Panc1 (cell line): ENCODE measurements at regions of chr9 and their contacts with region 1.

Region 1: DNA sequence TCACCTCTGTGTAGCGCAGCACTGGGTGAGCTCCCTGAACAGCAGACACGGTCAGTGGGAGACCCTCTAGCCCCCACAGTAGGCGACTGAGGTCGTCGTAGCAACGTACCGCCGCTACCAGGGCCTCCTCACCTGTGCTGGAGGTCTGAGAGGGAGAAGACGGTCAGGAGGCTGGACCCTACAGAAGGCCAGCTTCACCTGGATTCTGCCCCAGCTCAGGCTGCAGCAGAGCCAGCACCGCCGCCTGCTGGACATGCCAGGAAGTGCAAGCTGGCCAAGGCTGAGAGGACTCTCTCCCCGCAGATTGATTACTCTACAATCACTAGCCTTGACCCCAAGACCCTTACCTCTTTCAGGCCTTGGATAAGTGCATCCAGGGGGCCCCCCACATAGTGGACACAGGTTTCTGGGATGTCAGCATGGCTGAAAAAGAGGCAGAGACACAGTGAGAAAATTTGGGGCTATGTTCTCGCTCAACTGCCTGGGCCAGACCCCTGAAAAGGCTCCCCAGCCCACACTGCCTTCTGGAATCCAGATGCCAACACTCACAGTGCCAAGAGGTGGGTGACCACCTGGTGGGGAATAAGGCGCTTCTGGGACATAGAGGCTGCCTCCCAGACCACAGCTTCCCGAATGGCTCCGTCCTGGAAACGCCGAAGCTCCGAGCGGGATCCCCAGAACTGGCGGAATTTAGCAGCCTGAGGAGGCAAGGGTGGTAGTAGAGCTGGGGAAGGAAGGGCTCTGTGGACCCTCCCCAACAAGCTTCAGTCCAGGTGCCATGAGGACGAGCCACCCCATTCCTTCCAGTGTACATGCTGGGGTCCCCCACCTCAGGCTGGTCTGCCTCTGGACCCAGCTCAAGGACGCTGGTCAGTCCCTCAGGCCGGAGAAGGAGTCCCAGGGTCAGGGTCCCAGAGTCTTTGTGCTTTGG is 6.9 kb downstream of the NOL6 start:
- DNase-seq: no peak
- ATAC-seq: peak; percentile 81
- H3K4me3 ChIP-seq: no peak overlapping the region
- H3K27ac ChIP-seq: no peak overlapping the region
- H3K4me1 ChIP-seq: 0 out of 2 replicates have a peak, but pooled peaks cover under 1% of the 10 kb centered on the region
- H3K27me3 ChIP-seq: no peaks in the 10 kb centered on the region
- CTCF ChIP-seq: no peak

Region 2: GRCh38 chr9:32854271-32854670 is 612.6 kb before region 1 on chr9:
- CTCF ChIA-PET with region 1: no interaction called
- POLR2A ChIA-PET with region 1: no interaction called
- in situ Hi-C with region 1: no loop called
- intact Hi-C with region 1: no loop called
- DNase-seq: no peak
- ATAC-seq: no peak
- H3K4me3 ChIP-seq: no peak overlapping the region
- H3K27ac ChIP-seq: no peak overlapping the region
- H3K4me1 ChIP-seq: no peaks in the 10 kb centered on the region
- H3K27me3 ChIP-seq: 0 out of 2 replicates have a peak, but pooled peaks cover 4% of the 10 kb centered on the region
- CTCF ChIP-seq: no peak

Region 3: GRCh38 chr9:33340186-33340585 is 126.6 kb before region 1 on chr9:
- CTCF ChIA-PET with region 1: no interaction called
- POLR2A ChIA-PET with region 1: no interaction called
- in situ Hi-C with region 1: no loop called
- intact Hi-C with region 1: no loop called
- DNase-seq: no peak
- ATAC-seq: no peak
- H3K4me3 ChIP-seq: no peak overlapping the region
- H3K27ac ChIP-seq: no peak overlapping the region
- H3K4me1 ChIP-seq: no peaks in the 10 kb centered on the region
- H3K27me3 ChIP-seq: no peaks in the 10 kb centered on the region
- CTCF ChIP-seq: no peak

Region 4: DNA sequence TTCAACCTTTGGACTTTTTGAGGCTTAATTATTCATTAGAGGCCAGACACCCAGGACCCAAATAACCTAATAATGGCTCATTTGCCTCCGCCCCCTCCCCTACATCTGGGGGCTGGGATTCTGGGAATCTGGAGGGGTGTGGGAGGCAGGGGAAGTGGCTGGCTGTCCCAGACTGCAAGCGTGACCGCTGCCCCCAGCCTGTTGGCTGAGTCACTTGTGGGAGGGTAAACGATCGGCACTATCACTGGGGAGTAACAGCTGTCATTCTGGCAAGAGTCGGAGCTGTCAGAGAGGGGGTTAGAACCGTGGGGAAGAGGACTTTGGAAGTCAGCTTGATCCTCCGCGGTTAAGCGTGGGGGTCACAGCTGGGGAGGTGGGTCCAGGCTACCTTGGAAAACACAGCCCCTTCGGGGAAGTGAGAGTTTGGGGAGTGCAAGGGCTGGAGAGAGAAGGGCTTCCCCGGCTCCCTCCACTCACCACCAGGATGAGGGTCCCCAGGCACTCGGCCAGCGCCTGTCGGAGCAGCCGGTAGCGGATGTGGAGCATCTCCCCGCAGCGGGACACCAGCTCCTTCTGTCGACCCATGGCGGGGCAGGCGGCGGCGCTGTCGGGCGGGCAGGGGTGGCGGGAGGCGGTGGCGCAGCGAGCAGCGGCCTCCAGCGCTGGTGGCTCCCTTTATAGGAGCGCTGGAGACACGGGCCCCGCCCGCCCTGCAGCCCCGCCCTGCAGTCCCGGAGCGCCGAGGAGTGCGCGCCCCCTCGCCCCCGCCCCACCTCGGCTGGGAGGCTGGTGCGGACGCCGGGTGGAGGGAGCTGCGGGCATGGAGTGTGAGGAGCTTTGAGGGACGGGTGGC is 19.7 kb before region 1 on chr9 and contains the start of gene AQP3:
- CTCF ChIA-PET with region 1: interaction called, 16 read pairs
- POLR2A ChIA-PET with region 1: no interaction called
- in situ Hi-C with region 1: no loop called
- intact Hi-C with region 1: no loop called
- DNase-seq: no peak
- ATAC-seq: peak; percentile 89
- H3K4me3 ChIP-seq: peak within 1 kb of the TSS; percentile 20 to 37
- H3K27ac ChIP-seq: no peak within 1 kb of the TSS
- H3K4me1 ChIP-seq: peaks cover 7% of the 10 kb centered on the region; the same call in 1 of the 2 replicates
- H3K27me3 ChIP-seq: peaks cover 3% of the 10 kb centered on the region
- CTCF ChIP-seq: no peak
- total RNA-seq, gene AQP3: 1.0 TPM